GM13976 (cell line): ENCODE measurements at regions of chr2 and their contacts with region 1.

Region 1: GRCh38 chr2:69724540-69725159 is 17.3 kb upstream of the ANXA4 start:
- DNase-seq: peak; percentile 73
- CTCF ChIP-seq: peak; percentile 87

Region 2: GRCh38 chr2:69902213-69902922 is 177.7 kb after region 1 on chr2:
- in situ Hi-C with region 1: loop called (anchors 10 kb)
- DNase-seq: no peak
- CTCF ChIP-seq: no peak

Region 3: GRCh38 chr2:71299507-71299906 is 1574.9 kb after region 1 on chr2:
- in situ Hi-C with region 1: no loop called
- DNase-seq: peak; percentile 46
- CTCF ChIP-seq: peak; percentile 42